ENCODE measurements at regions of chr15 and their contacts with region 1.

Region 1: DNA sequence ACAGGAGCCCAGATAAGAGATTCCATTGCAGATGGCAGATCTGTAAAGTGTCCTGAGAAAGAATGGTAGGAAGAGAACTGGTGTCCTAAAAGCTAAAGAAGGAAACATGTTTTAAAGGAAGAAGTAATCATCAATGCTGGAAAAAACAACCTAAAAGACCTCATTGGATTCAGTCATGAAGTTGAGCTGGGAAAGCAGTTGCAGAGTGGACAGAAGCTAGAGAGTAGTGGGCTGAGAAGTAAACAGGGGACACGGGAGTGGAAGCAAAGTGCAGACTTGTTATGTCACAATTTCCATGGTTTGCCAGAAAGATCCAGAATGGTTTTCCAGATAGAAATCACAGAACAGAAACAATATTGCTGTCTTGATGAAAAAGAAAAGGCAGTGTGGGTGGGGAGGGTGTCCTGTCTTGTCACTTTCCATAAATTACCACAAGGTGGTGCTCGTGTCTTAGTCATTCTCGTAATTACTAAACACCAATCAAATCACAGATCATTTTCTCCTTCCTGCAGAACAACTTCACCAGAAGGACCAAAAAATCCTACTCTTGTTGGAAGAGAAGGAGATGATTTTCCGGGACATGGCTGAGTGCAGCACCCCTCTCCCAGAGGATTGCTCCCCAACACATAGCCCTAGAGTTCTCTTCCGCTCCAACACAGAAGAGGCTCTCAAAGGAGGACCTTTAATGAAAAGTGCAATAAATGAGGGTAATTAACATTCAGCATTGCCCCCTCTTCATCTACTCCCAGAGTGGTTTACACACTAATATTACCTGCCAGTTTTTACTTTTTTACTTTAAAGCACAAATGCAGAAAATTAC is 64.5 kb downstream of the KLHL25 start:
- DNase-seq: peak; percentile 64 to 68 (median 66)
- ATAC-seq: peak; percentile 88
- H3K4me3 ChIP-seq: no peak overlapping the region
- H3K27ac ChIP-seq: no peak overlapping the region
- H3K4me1 ChIP-seq: no peaks in the 10 kb centered on the region
- H3K27me3 ChIP-seq: no peaks in the 10 kb centered on the region
- CTCF ChIP-seq: peak; percentile 59 to 78 (median 68); a peak in 5 of 6 replicates
- EP300 ChIP-seq: no peak
- POLR2A ChIP-seq: no peak
- RAD21 ChIP-seq: peak; percentile 54 to 74

Region 2: DNA sequence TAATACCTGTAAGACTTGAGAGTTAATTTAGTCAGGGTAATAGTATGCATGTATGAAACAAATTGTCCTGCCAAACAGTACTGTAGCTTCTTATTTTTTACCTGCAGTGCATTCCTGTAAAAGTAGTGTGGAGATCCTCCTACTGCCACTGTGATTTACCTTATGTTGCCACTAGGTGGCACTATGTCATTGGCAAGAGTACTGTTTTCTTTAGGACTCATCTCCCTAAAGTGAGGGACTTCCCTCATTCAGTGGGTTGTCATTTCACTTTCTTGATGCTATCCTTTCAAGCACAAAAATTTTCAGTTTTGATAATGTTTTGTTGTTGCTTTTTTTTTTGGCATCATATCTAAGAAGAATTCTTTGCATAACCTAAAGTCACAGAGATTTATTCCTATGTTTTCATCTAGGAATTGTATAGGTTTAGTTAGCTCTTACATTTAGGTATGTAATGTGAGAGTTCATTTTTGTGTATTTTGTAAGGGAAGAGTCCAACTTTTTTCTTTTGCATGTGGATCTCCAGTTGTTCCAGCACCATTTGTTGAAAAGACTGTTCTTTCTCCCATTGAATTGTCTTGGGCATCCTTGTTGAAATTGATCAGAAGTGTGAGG is 244.1 kb before region 1 on chr15:
- CTCF ChIA-PET with region 1: no interaction called
- POLR2A ChIA-PET with region 1: no interaction called
- in situ Hi-C with region 1: no loop called
- intact Hi-C with region 1: loop called (anchors 10 kb)
- DNase-seq: peak; percentile 48 to 74 (median 60)
- ATAC-seq: peak; percentile 93
- H3K4me3 ChIP-seq: no peak overlapping the region
- H3K27ac ChIP-seq: no peak overlapping the region
- H3K4me1 ChIP-seq: no peaks in the 10 kb centered on the region
- H3K27me3 ChIP-seq: no peaks in the 10 kb centered on the region
- CTCF ChIP-seq: peak; percentile 56 to 73 (median 71); a peak in 5 of 6 replicates
- EP300 ChIP-seq: no peak
- POLR2A ChIP-seq: no peak
- RAD21 ChIP-seq: peak; percentile 53 to 73

Region 3: DNA sequence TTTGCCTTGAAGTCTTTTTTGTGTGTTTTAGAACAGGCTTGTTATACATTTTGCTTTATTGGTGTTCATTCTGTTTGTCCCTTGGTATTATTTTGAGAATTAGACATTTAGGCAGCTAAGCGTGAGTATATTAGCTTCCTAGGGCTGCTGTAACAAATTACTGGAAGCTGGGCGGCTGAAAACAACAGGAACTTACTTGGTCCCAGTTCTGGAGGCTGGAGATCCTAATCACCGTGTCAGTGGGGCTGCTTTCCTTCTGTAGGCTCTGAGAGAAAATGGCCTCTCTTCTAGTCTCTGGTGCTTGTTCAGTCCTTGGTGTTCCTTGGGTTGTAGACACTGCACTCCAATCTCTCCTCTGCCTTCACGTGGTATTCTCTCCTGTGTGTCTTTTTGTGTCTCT is 77.8 kb before region 1 on chr15:
- CTCF ChIA-PET with region 1: no interaction called
- POLR2A ChIA-PET with region 1: no interaction called
- in situ Hi-C with region 1: no loop called
- intact Hi-C with region 1: no loop called
- DNase-seq: no peak
- ATAC-seq: no peak
- H3K4me3 ChIP-seq: no peak overlapping the region
- H3K27ac ChIP-seq: no peak overlapping the region
- H3K4me1 ChIP-seq: no peaks in the 10 kb centered on the region
- H3K27me3 ChIP-seq: 0 out of 5 replicates have a peak, but pooled peaks cover 0 to 3% of the 10 kb centered on the region in 2 experiments
- CTCF ChIP-seq: no peak
- EP300 ChIP-seq: no peak
- POLR2A ChIP-seq: no peak
- RAD21 ChIP-seq: no peak

Region 4: GRCh38 chr15:85831415-85832113 is 101.4 kb after region 1 on chr15:
- CTCF ChIA-PET with region 1: interaction called, 5 read pairs
- POLR2A ChIA-PET with region 1: no interaction called
- in situ Hi-C with region 1: loop called (anchors 5 kb)
- intact Hi-C with region 1: loop called (anchors 1 kb)
- DNase-seq: peak; percentile 19 to 44 (median 27)
- ATAC-seq: peak; percentile 90
- H3K4me3 ChIP-seq: no peak overlapping the region
- H3K27ac ChIP-seq: no peak overlapping the region
- H3K4me1 ChIP-seq: no peaks in the 10 kb centered on the region
- H3K27me3 ChIP-seq: peaks cover 0 to 5% of the 10 kb centered on the region in 2 experiments; a peak in 1 of 5 replicates
- CTCF ChIP-seq: peak; percentile 57 to 58 (median 58)
- EP300 ChIP-seq: no peak
- POLR2A ChIP-seq: no peak
- RAD21 ChIP-seq: peak; percentile 22 to 55; a peak in 3 of 4 replicates

Region 5: GRCh38 chr15:85840065-85840801 is 110.0 kb after region 1 on chr15:
- CTCF ChIA-PET with region 1: interaction called, 20 read pairs
- POLR2A ChIA-PET with region 1: no interaction called
- in situ Hi-C with region 1: no loop called
- intact Hi-C with region 1: loop called (anchors 1 kb)
- DNase-seq: peak; percentile 73 to 77 (median 74)
- ATAC-seq: peak; percentile 100
- H3K4me3 ChIP-seq: no peak overlapping the region
- H3K27ac ChIP-seq: no peak overlapping the region
- H3K4me1 ChIP-seq: peaks cover 0 to 5% of the 10 kb centered on the region in 2 experiments; a peak in 1 of 5 replicates
- H3K27me3 ChIP-seq: no peaks in the 10 kb centered on the region; a peak in 1 of 5 replicates
- CTCF ChIP-seq: peak; percentile 72 to 90 (median 85)
- EP300 ChIP-seq: no peak
- POLR2A ChIP-seq: no peak
- RAD21 ChIP-seq: peak; percentile 62 to 77

Measured in K562 (cell line).